Heart right ventricle (tissue), 16 donors: ENCODE measurements at regions of chr5 and their contacts with region 1.

Region 1: GRCh38 chr5:142542906-142543305 is 143.0 kb downstream of the FGF1 start:
- DNase-seq: peak in 1 of 2 donors; percentile 61
- ATAC-seq: peak; percentile 71 to 87 (median 78)
- H3K4me3 ChIP-seq: no peak overlapping the region
- H3K27ac ChIP-seq: peak overlapping the region; percentile 65 to 90 (median 78)
- H3K4me1 ChIP-seq: peaks cover 19 to 77% (median 48%) of the 10 kb centered on the region in 9 donors
- H3K27me3 ChIP-seq: no peaks in the 10 kb centered on the region
- CTCF ChIP-seq: peak; percentile 8 to 52 (median 28)

Region 2: GRCh38 chr5:142280066-142280911 is 262.6 kb before region 1 on chr5:
- intact Hi-C with region 1: loop called in 1 of 10 experiments (anchors 2 kb)
- DNase-seq: peak; percentile 79 to 88
- ATAC-seq: peak; percentile 88 to 93 (median 92)
- H3K4me3 ChIP-seq: no peak overlapping the region
- H3K27ac ChIP-seq: peak overlapping the region; percentile 62 to 89 (median 76)
- H3K4me1 ChIP-seq: peaks cover 6 to 39% (median 27%) of the 10 kb centered on the region in 9 donors
- H3K27me3 ChIP-seq: no peaks in the 10 kb centered on the region
- CTCF ChIP-seq: no peak

Region 3: DNA sequence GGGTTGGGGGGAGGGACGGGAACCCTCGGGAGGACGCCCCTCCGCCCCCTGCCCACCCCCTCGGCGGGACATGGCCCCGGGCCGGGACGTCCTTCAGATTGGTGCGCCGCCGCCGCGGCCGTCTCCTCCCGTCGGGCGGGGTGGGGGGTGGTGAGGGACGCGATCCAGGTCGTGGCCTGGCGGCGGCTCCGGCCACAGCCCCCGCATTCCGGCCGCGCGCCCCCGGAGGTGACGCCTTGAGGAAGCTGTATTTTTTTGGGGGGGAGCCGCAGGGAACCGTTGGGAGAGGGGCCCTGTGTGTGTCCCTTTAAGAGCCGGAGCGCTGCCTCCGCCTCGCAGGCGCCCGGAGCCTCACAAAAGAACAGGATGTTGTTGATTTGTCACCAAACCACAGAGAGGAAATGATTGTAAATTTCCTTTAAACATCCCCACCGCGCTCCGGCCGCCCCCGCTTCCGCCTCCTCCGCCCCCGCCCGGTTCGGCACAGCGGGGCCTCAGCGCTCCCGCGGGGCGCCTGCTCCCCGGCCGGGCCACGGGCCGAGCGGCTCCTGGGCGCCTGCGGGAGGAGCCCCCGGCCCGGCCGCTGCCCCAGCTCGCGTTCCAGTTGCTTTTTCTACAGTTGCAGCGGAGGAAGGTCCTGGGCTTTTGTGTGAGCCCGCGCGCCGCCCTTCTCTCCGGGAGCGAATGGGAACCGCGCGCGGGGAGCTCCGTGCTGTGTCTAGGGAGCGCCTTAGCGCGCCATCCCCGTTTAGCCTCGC is 186.0 kb before region 1 on chr5:
- intact Hi-C with region 1: loop called in 6 of 10 experiments (anchors 1 to 5 kb)
- DNase-seq: peak; percentile 86 to 90
- ATAC-seq: peak; percentile 90 to 95 (median 92)
- H3K4me3 ChIP-seq: peak overlapping the region; percentile 38 to 81 (median 66)
- H3K27ac ChIP-seq: peak overlapping the region; percentile 90 to 98 (median 96)
- H3K4me1 ChIP-seq: peaks cover 0 to 28% (median 18%) of the 10 kb centered on the region in 9 donors
- H3K27me3 ChIP-seq: peaks cover 0 to 65% (median 0%) of the 10 kb centered on the region in 7 donors
- CTCF ChIP-seq: peak in 2 of 9 donors; percentile 1 to 6

Region 4: DNA sequence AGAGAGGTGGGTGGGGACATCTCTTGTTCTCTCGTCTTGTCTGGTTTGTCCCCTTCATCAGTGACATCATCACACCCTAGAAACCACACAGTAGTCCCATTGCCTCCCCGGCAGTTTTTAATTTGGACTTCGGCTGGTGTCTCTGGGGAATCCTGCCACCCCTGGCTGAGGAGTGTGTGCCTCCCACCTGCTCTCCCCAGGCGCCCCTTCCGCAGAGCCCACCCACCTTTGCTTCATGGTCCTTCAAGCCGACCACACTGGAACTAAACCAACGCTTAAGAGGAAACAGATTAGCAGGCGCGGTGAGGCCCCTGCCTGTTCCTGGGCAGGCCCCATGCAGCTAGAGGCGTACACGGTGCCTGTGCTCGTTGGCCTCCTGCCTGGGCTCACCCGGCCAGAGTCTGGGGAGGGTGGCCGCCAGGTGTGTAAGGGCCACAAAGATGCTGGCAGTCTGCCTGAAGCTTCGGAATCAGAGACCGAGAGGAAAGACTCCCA is 110.5 kb before region 1 on chr5:
- intact Hi-C with region 1: loop called in 8 of 10 experiments (anchors 5 to 10 kb)
- DNase-seq: peak in 1 of 2 donors; percentile 13
- ATAC-seq: peak in 5 of 8 donors; percentile 32 to 61 (median 45)
- H3K4me3 ChIP-seq: no peak overlapping the region
- H3K27ac ChIP-seq: peak overlapping the region in 4 of 10 donors; percentile 7 to 70 (median 52)
- H3K4me1 ChIP-seq: peaks cover 5 to 59% (median 27%) of the 10 kb centered on the region in 9 donors
- H3K27me3 ChIP-seq: peaks cover 0 to 13% (median 0%) of the 10 kb centered on the region in 7 donors
- CTCF ChIP-seq: no peak

Region 5: DNA sequence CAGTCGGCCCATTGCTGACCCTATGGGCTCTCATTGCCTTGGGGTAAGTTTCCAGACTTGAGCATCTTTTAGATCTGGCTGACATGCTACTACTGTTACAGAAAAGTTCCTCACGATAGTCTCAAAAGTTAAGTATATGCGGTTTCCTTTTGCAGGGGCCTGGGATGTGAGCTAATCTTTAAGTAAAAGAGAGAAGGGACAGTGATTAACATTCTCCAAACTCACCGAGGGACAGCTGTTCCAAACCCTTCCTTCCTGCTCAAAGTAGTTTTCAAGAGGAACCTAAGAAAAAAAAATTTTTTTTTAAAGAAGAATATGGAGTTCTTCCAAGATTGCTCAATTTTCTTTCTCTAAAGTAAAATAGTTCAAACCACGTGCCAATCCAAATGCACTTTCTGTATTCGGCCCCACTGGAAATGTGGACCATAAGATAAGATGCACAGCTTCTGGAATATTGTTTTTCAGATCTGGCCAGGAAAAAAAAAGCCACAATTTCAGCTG is 50.1 kb before region 1 on chr5:
- intact Hi-C with region 1: loop called in 2 of 10 experiments (anchors 5 kb)
- DNase-seq: peak in 1 of 2 donors; percentile 11
- ATAC-seq: peak in 7 of 8 donors; percentile 30 to 73 (median 42)
- H3K4me3 ChIP-seq: peak overlapping the region in 3 of 10 donors; percentile 4 to 17 (median 14)
- H3K27ac ChIP-seq: peak overlapping the region; percentile 14 to 83 (median 54)
- H3K4me1 ChIP-seq: peaks cover 2 to 58% (median 19%) of the 10 kb centered on the region in 9 donors
- H3K27me3 ChIP-seq: no peaks in the 10 kb centered on the region
- CTCF ChIP-seq: no peak